GM13977 (cell line): ENCODE measurements at regions of chr6 and their contacts with region 1.

Region 1: DNA sequence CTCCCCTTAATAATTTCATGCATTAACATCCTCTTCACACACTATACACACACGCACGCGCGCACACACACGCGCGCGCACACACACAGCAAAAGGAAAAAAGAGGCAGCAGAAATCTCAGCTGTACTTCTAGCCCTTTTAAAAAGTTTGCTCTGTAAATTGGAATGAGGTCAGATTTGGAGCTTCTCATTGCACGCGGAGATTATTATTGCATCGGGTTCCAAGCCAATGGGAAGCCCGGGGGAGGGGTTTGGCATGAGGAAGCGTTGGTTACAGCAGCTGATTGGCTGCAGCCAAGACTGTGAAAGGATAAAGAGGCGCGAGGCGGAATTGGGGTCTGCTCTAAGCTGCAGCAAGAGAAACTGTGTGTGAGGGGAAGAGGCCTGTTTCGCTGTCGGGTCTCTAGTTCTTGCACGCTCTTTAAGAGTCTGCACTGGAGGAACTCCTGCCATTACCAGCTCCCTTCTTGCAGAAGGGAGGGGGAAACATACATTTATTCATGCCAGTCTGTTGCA is at the start of gene SOX4:
- DNase-seq: peak; percentile 92
- CTCF ChIP-seq: no peak

Region 2: DNA sequence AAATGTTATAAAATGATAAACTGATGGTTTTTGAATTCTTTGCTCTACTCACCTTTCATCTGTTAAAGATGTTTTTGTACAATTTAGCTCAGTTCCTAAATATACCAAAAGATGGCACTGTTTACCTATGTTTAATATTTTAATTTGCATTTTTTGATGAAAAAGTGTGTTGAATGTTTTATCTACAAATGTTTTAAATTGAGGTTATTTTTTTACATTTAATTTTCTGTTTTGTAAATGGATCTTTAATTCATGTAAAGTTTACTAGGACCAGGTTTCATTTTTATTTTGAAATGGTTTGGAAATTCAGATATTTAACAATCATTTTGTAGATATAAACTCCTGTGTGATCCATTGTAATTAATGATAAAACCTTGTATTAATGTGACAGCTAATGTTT is 1029.2 kb before region 1 on chr6:
- in situ Hi-C with region 1: loop called (anchors 10 kb)
- DNase-seq: peak; percentile 34
- CTCF ChIP-seq: peak; percentile 47

Region 3: GRCh38 chr6:20708367-20709124 is 884.9 kb before region 1 on chr6:
- in situ Hi-C with region 1: loop called (anchors 25 kb)
- DNase-seq: peak; percentile 16
- CTCF ChIP-seq: no peak

Region 4: GRCh38 chr6:20919677-20920385 is 673.6 kb before region 1 on chr6:
- in situ Hi-C with region 1: loop called (anchors 25 kb)
- DNase-seq: peak; percentile 60
- CTCF ChIP-seq: no peak

Region 5: GRCh38 chr6:21404577-21404976 is 188.9 kb before region 1 on chr6:
- in situ Hi-C with region 1: no loop called
- DNase-seq: peak; percentile 20
- CTCF ChIP-seq: no peak